Breast epithelium (tissue), 4 donors: ENCODE measurements at regions of chr3 and their contacts with region 1.

Region 1: DNA sequence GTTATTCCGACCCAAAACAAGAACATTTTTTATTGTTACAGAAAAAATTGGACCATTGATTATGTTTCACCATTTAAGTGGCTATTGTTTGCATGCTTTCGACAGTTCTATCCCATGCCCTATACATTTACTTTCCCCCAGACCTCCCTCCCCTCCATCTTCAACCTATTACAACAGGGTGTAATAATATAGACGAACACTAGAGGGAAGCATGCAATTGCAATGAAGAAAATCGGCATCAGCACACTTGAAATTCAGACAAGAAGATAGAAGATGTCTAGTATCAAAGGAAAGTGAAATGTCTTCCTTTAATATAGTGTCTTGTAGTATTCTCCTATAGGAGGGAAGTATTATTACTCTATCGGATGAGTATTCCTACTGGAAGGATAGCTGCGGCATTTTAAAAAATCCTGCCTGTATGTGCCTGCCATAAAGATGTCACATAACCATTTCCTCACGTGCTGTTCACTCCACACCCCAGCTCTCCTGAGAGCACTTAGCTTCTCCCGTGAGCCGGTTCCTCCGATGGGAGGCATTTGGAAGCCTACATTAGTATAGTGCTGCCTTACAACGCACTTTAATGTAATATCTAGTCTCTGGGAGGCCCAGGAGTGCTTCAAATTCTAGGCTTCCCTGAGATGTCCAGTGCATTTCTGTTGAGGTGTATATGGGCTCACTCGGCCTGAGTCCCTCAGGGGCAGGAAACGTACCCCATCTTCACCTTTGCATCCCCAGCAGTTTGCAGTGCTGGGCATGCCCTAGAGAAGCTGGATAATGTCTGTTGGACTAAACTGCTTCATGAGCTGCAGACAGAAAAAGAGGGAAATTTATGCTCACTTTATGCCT is 17.8 kb upstream of the ERICH6 start:
- DNase-seq: no peak
- H3K4me3 ChIP-seq: no peak overlapping the region
- H3K27ac ChIP-seq: no peak overlapping the region
- H3K4me1 ChIP-seq: no peaks in the 10 kb centered on the region
- H3K27me3 ChIP-seq: no peaks in the 10 kb centered on the region
- CTCF ChIP-seq: peak; percentile 81 to 90 (median 88)
- POLR2A ChIP-seq: no peak

Region 2: DNA sequence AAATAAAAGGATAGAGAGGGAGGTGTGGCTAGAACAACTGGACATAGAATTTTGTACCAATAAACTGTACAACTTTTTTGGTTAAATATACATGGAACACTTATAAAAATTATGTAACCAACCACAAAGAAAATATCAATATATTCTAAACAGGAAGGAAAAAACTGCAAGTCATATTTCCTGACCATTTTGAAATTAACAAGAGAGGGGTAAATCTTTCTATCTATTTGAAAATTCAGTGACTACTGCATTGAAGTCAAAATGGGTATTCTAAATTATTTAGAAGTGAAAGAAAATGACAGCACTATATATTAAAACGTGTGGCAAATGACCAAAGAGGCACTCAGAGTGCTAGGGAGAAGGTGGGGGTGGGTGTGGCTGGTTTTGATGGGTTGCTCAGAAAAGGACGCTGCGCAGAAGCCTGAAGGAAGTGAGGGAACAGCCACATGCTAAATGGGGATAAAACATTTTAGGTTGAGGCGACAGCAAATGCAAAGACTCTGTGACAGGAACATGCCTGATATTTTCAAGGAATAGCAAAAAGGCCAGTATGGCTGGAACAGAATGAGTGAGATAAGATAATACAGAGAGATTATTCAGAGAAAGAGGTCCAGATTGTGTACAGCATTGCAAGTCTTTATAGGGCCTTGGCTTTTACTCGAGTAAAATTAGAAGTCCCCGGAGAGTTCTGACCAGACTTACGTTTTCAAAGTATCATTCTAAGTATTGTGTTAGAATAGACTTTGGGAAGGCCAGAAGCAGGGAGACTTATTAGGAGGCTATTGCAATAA is 58.9 kb before region 1 on chr3:
- intact Hi-C with region 1: no loop called
- DNase-seq: no peak
- H3K4me3 ChIP-seq: no peak overlapping the region
- H3K27ac ChIP-seq: no peak overlapping the region
- H3K4me1 ChIP-seq: no peaks in the 10 kb centered on the region
- H3K27me3 ChIP-seq: no peaks in the 10 kb centered on the region
- CTCF ChIP-seq: no peak
- POLR2A ChIP-seq: no peak

Region 3: GRCh38 chr3:150868282-150868681 is 146.8 kb after region 1 on chr3:
- intact Hi-C with region 1: loop called (anchors 10 kb)
- DNase-seq: no peak
- H3K4me3 ChIP-seq: no peak overlapping the region
- H3K27ac ChIP-seq: no peak overlapping the region
- H3K4me1 ChIP-seq: no peaks in the 10 kb centered on the region
- H3K27me3 ChIP-seq: no peaks in the 10 kb centered on the region
- CTCF ChIP-seq: no peak
- POLR2A ChIP-seq: no peak

Region 4: GRCh38 chr3:151146071-151146730 is 424.7 kb after region 1 on chr3:
- intact Hi-C with region 1: loop called (anchors 10 kb)
- DNase-seq: peak; percentile 42 to 69
- H3K4me3 ChIP-seq: peak overlapping the region in 1 of 3 donors; percentile 4
- H3K27ac ChIP-seq: peak overlapping the region in 1 of 2 donors; percentile 58
- H3K4me1 ChIP-seq: no peaks in the 10 kb centered on the region
- H3K27me3 ChIP-seq: no peaks in the 10 kb centered on the region
- CTCF ChIP-seq: peak; percentile 66 to 82 (median 74)
- POLR2A ChIP-seq: no peak